ENCODE measurements at regions of chr18 and their contacts with region 1.

Region 1: GRCh38 chr18:9079818-9080528 is 22.5 kb upstream of the NDUFV2 start:
- DNase-seq: no peak
- H3K4me3 ChIP-seq: no peak overlapping the region
- H3K27ac ChIP-seq: no peak overlapping the region
- H3K4me1 ChIP-seq: peaks cover 8 to 14% of the 10 kb centered on the region in 2 donors
- H3K27me3 ChIP-seq: no peaks in the 10 kb centered on the region
- CTCF ChIP-seq: no peak
- POLR2A ChIP-seq: no peak

Region 2: GRCh38 chr18:9017170-9017904 is 62.6 kb before region 1 on chr18:
- intact Hi-C with region 1: no loop called
- DNase-seq: peak; percentile 40 to 46
- H3K4me3 ChIP-seq: no peak overlapping the region
- H3K27ac ChIP-seq: peak overlapping the region; percentile 39 to 76 (median 64)
- H3K4me1 ChIP-seq: peaks cover 0 to 10% of the 10 kb centered on the region in 2 donors
- H3K27me3 ChIP-seq: no peaks in the 10 kb centered on the region
- CTCF ChIP-seq: no peak
- POLR2A ChIP-seq: no peak

Region 3: GRCh38 chr18:9136315-9137155 is 56.6 kb after region 1 on chr18 and contains the start of gene ANKRD12:
- intact Hi-C with region 1: no loop called
- DNase-seq: peak; percentile 98
- H3K4me3 ChIP-seq: peak within 1 kb of the TSS; percentile 71 to 74 (median 74)
- H3K27ac ChIP-seq: peak within 1 kb of the TSS; percentile 98
- H3K4me1 ChIP-seq: peaks cover 40% of the 10 kb centered on the region in 2 donors
- H3K27me3 ChIP-seq: no peaks in the 10 kb centered on the region
- CTCF ChIP-seq: peak in 1 of 6 experiments; percentile 2
- POLR2A ChIP-seq: peak; percentile 88 to 93
- total RNA-seq, gene ANKRD12: 74.6 to 155 (median 109) TPM

Region 4: GRCh38 chr18:9260388-9261380 is 180.7 kb after region 1 on chr18:
- intact Hi-C with region 1: no loop called
- DNase-seq: no peak
- H3K4me3 ChIP-seq: no peak overlapping the region
- H3K27ac ChIP-seq: no peak overlapping the region
- H3K4me1 ChIP-seq: no peaks in the 10 kb centered on the region
- H3K27me3 ChIP-seq: no peaks in the 10 kb centered on the region
- CTCF ChIP-seq: no peak
- POLR2A ChIP-seq: no peak

Region 5: GRCh38 chr18:9334329-9334972 is 254.5 kb after region 1 on chr18 and contains the start of gene TWSG1:
- intact Hi-C with region 1: loop called (anchors 10 kb)
- DNase-seq: peak; percentile 96
- H3K4me3 ChIP-seq: peak within 1 kb of the TSS; percentile 59 to 80 (median 66)
- H3K27ac ChIP-seq: peak within 1 kb of the TSS; percentile 70 to 82 (median 80)
- H3K4me1 ChIP-seq: peaks cover 7 to 15% of the 10 kb centered on the region in 2 donors
- H3K27me3 ChIP-seq: no peaks in the 10 kb centered on the region
- CTCF ChIP-seq: peak in 2 of 6 experiments; percentile 19 to 63
- POLR2A ChIP-seq: peak; percentile 43 to 80
- total RNA-seq, gene TWSG1: 53.0 to 62.9 (median 59.7) TPM

Region 6: DNA sequence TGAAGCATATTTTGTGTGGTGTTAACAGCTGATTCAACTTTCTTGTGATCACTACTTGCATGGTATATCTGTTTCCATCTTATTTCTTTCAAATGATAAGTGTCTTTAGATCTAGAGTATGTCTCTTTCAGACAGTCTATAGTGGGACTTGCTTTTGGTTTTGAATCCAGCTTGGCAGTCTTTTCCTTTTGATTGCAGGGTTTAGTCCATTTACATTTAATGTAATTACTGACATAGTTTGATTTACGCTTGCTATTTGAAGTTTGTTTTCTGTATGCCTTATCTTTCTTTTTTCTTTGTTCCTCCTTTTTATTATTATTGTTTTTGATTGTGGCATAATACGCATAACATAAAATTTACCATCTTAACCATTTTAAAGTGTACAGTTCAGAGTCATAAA is 386.2 kb after region 1 on chr18:
- intact Hi-C with region 1: no loop called
- DNase-seq: no peak
- H3K4me3 ChIP-seq: no peak overlapping the region
- H3K27ac ChIP-seq: no peak overlapping the region
- H3K4me1 ChIP-seq: no peaks in the 10 kb centered on the region
- H3K27me3 ChIP-seq: no peaks in the 10 kb centered on the region
- CTCF ChIP-seq: no peak
- POLR2A ChIP-seq: no peak

Region 7: GRCh38 chr18:9516437-9517064 is 436.6 kb after region 1 on chr18:
- intact Hi-C with region 1: loop called (anchors 10 kb)
- DNase-seq: no peak
- H3K4me3 ChIP-seq: no peak overlapping the region
- H3K27ac ChIP-seq: no peak overlapping the region
- H3K4me1 ChIP-seq: no peaks in the 10 kb centered on the region
- H3K27me3 ChIP-seq: no peaks in the 10 kb centered on the region
- CTCF ChIP-seq: peak; percentile 70 to 87 (median 78)
- POLR2A ChIP-seq: no peak

Measured in thyroid gland (tissue), 4 donors.